GM10248 (cell line): ENCODE measurements at regions of chr17 and their contacts with region 1.

Region 1: GRCh38 chr17:27236717-27237315 is 57.1 kb upstream of the WSB1 start:
- DNase-seq: peak; percentile 64
- CTCF ChIP-seq: peak; percentile 85

Region 2: DNA sequence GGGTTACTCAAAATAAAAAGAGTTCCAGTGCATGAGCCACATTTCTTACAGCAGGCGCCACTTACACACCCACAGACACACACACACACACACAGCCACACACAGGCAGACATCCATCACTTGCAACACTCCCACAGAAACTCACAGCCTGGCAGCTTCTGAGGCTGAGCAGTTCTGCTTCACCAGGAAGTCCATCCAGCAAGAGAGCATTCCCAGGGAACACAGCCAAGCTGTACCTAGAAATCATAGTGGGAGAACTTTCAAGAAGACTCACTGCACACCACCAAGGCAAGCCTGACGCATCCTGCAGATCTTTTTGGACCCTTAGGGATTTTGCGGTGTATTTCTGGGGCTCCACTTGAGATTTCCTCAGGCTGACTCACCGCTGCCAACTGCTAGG is 83.8 kb before region 1 on chr17:
- CTCF ChIA-PET with region 1: no interaction called
- POLR2A ChIA-PET with region 1: no interaction called
- DNase-seq: peak; percentile 3
- CTCF ChIP-seq: no peak

Region 3: DNA sequence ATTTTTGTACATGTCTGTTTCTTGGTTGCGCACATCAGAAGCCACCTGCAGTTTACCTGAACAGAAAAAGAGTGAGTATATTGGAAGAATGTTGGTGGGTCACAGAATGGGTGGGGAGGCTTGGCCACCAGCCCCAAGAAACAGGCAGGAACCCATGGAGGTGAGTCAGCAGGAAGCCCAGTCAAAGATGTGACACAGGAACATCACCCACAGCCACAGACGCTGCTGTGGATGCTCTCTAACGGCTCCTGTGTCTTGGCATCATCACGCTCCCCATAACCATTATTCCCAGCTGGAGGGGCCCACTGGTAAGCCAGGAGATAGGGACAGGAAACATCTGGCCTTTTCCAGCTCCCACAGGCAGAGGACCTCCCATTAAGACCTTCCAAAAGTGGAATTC is 36.9 kb before region 1 on chr17:
- CTCF ChIA-PET with region 1: interaction called, 29 read pairs
- POLR2A ChIA-PET with region 1: no interaction called
- DNase-seq: no peak
- CTCF ChIP-seq: no peak

Region 4: GRCh38 chr17:27256225-27257030 is 19.6 kb after region 1 on chr17:
- CTCF ChIA-PET with region 1: interaction called, 33 read pairs
- POLR2A ChIA-PET with region 1: no interaction called
- DNase-seq: no peak
- CTCF ChIP-seq: no peak

Region 5: GRCh38 chr17:27319536-27320221 is 82.9 kb after region 1 on chr17:
- CTCF ChIA-PET with region 1: interaction called, 22 read pairs
- POLR2A ChIA-PET with region 1: interaction called, 3 read pairs
- DNase-seq: no peak
- CTCF ChIP-seq: no peak

Region 6: GRCh38 chr17:27353461-27354050 is 116.7 kb after region 1 on chr17:
- CTCF ChIA-PET with region 1: interaction called, 19 read pairs
- POLR2A ChIA-PET with region 1: no interaction called
- DNase-seq: peak; percentile 97
- CTCF ChIP-seq: peak; percentile 92

Region 7: DNA sequence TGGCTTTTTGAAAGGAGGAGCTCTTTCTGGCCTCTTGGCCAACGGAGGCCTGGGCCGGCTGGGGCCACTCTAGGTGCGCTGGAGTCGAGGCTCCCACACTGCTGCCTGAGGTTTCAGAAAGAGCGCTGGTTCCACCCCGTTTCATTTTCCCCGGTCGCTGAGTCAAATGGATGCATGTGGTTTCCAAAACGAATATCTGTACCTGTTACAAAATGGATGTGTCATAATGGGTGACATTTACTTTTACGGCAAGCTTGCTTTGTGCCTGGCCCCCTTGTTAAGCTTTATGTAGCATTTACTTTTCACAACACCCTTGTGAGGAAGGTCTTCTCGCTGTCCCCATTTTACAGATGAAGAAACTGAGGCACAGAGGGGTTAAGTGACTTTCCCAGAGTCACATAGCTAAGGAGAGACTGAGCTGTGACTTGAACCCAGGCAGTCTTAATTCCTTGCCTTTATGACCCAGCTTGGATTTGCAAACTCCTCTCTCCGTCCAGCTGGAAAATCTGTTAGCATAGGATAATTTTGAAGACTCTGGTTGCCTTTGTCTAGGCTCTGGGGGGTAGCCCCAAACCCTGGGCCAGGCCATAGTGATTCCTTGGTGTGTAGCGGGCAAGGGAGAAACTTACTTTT is 230.0 kb after region 1 on chr17:
- CTCF ChIA-PET with region 1: interaction called, 12 read pairs
- POLR2A ChIA-PET with region 1: interaction called, 3 read pairs
- DNase-seq: peak; percentile 80
- CTCF ChIP-seq: no peak